Colonic mucosa (tissue), 4 donors: ENCODE measurements at regions of chr7 and their contacts with region 1.

Region 1: GRCh38 chr7:26376175-26376917 is 84.7 kb downstream of the SNX10 start:
- DNase-seq: peak; percentile 49
- H3K4me3 ChIP-seq: peak overlapping the region; percentile 48
- H3K27ac ChIP-seq: no peak overlapping the region
- H3K4me1 ChIP-seq: no peaks in the 10 kb centered on the region
- H3K27me3 ChIP-seq: no peaks in the 10 kb centered on the region
- CTCF ChIP-seq: no peak

Region 2: GRCh38 chr7:26500749-26501352 is 124.5 kb after region 1 on chr7:
- intact Hi-C with region 1: loop called (anchors 2 kb)
- DNase-seq: no peak
- H3K4me3 ChIP-seq: no peak overlapping the region
- H3K27ac ChIP-seq: no peak overlapping the region
- H3K4me1 ChIP-seq: no peaks in the 10 kb centered on the region
- H3K27me3 ChIP-seq: no peaks in the 10 kb centered on the region
- CTCF ChIP-seq: peak; percentile 44

Region 3: DNA sequence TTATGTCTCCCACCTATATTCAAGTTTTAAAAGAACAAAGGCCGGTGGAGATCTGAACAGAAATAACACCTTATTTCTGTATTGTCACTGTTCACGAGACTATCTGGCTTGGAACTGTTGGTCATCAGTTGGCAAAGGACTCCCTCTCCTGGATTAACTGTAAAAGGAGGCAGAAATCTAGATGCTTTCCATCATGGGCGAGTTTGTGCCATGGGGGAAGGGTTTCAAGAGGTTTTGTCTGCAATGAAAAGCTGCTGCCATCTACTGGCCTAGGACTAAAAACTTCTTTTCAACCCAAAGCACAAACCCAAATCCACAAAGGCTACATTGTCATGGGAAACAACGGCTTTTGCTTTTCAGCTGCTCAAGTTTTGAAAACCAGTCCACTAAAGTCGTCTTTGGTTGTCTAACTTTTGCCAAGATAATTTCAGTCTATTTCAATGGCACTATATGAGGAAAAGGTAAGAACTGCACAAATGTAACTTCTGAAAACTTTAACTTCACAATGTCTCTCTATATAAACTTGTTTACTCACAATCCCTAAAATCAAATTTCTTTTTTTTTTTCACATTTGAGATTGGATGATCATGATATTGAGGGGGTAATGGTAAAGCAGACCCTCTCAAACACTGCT is 291.3 kb after region 1 on chr7:
- intact Hi-C with region 1: loop called (anchors 2 kb)
- DNase-seq: peak; percentile 81
- H3K4me3 ChIP-seq: no peak overlapping the region
- H3K27ac ChIP-seq: no peak overlapping the region
- H3K4me1 ChIP-seq: no peaks in the 10 kb centered on the region
- H3K27me3 ChIP-seq: no peaks in the 10 kb centered on the region
- CTCF ChIP-seq: peak; percentile 58

Region 4: DNA sequence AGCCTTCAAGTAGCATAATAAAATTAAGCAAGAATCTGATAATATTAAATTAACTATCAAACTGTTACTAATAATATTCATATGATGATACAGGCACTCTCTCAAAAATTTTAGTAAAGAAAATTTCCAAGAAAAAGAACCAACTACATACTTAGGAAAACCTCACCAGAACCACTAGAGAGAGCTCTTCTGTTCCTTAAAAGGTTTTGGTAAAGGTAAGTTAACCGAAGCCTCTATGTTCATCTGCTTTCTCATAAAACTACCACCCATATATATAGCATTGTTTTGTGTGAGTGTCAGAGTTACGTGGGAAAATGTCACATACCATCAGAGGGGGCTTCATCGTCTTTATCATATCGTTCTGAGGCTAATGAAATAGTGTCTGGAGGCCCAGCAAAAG is 467.4 kb after region 1 on chr7:
- intact Hi-C with region 1: loop called (anchors 10 kb)
- DNase-seq: no peak
- H3K4me3 ChIP-seq: no peak overlapping the region
- H3K27ac ChIP-seq: no peak overlapping the region
- H3K4me1 ChIP-seq: no peaks in the 10 kb centered on the region
- H3K27me3 ChIP-seq: no peaks in the 10 kb centered on the region
- CTCF ChIP-seq: no peak

Region 5: DNA sequence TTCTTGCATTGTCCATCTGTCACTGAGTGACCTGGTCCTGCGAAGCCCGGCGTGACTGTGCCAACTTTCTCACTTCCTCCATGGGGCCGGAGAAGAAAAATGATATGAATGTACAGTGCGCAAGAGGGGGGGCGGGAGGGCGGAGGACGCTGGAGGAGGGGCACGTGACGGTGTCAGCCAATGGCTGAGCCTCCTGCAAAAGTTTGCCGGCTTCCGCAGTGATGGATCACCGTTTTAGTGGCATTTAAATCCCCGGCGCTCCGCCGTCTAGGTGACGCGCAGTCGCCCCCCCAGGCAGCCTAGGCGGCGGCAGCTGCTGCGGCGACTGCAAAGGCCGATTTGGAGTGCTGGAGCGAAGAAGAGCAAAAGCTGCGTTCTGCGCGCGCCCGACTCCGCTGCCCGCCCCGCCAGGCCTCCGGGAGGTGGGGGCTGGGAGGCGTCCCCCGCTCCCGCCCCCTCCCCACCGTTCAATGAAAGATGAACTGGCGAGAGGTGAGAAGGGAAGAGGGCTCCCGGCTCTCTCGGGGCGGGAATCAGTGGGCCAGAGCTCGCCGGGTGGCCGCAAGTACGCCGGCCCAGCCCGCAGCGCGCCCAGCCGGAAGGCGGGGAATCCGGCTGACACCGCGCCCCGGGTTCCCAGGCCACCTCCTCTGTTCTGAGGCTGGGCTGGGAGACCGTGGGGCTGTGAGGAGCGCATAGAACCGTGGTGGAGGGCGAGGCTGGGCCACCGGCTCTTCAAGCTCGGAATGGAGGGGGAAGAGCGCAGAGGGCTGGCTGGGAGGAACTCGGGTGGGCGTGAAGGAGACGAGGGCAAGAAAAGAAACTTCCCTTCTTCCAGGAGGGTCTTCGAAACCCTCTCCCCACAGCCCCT is 719.8 kb after region 1 on chr7 and contains the start of gene HOXA1:
- intact Hi-C with region 1: loop called (anchors 10 kb)
- DNase-seq: peak; percentile 92
- H3K4me3 ChIP-seq: peak within 1 kb of the TSS; percentile 74
- H3K27ac ChIP-seq: peak within 1 kb of the TSS; percentile 92
- H3K4me1 ChIP-seq: peaks cover 11% of the 10 kb centered on the region
- H3K27me3 ChIP-seq: no peaks in the 10 kb centered on the region
- CTCF ChIP-seq: no peak
- total RNA-seq, gene HOXA1: 1.7 to 2.0 TPM